Dendritic cell treated with granulocyte-macrophage colony-stimulating factor and Interleukin-4, amounts not matched to agents 40 ng/mL and 50 ng/mL, for 4 days (primary cell): ENCODE measurements at regions of chr3 and their contacts with region 1.

Region 1: GRCh38 chr3:38651154-38651789 is 1.8 kb upstream of the SCN5A start:
- H3K4me3 Mint-ChIP-seq: no peak overlapping the region
- H3K27ac Mint-ChIP-seq: no peak overlapping the region
- H3K4me1 Mint-ChIP-seq: peaks cover 8% of the 10 kb centered on the region
- H3K27me3 Mint-ChIP-seq: peaks cover 19% of the 10 kb centered on the region

Region 2: GRCh38 chr3:38521391-38521987 is 129.8 kb before region 1 on chr3:
- intact Hi-C with region 1: loop called (anchors 1 kb)
- H3K4me3 Mint-ChIP-seq: no peak overlapping the region
- H3K27ac Mint-ChIP-seq: no peak overlapping the region
- H3K4me1 Mint-ChIP-seq: no peaks in the 10 kb centered on the region
- H3K27me3 Mint-ChIP-seq: no peaks in the 10 kb centered on the region

Region 3: DNA sequence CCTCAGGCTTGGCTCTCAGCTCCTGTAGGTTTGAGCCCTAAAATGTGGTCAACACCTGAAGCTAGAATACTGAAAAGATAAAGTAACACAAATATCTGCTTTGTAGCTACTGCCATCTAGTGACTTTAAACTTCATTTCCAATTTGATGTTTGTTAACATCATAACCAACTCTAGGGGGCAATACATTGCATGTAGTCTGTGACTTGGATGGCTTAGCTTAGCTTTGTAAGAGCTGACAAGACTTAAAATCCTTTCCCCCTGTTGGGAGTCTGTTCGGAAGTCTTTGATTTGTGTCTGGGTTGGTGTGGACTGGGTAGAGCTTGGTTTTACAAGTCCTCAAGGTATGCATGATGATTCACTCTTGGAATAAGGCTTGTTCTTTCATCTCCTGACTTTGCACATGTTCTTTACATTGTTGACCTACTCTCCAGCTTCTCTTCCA is 348.8 kb after region 1 on chr3:
- intact Hi-C with region 1: loop called (anchors 10 kb)
- H3K4me3 Mint-ChIP-seq: no peak overlapping the region
- H3K27ac Mint-ChIP-seq: no peak overlapping the region
- H3K4me1 Mint-ChIP-seq: no peaks in the 10 kb centered on the region
- H3K27me3 Mint-ChIP-seq: no peaks in the 10 kb centered on the region

Region 4: DNA sequence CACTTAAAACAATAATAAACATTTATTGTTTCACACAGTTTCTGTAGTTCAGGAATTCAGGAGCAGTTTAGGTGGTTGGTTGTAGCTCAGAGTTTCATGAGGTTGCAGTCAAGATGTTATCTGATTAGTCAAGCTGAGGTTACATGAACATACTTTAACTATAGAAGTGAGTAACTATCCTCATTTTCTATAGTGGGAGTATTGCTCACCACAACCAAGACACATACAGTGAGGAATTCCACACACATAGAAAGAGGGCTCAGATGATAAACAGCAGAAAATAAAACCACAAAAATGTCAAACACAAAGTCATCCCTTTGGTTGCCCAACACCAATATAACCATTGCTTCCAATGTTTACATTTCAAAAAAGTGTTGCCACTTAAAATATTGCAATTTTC is 386.9 kb after region 1 on chr3:
- intact Hi-C with region 1: loop called (anchors 10 kb)
- H3K4me3 Mint-ChIP-seq: no peak overlapping the region
- H3K27ac Mint-ChIP-seq: no peak overlapping the region
- H3K4me1 Mint-ChIP-seq: peaks cover 8% of the 10 kb centered on the region
- H3K27me3 Mint-ChIP-seq: peaks cover 1% of the 10 kb centered on the region